ENCODE measurements at regions of chr18 and their contacts with region 1.

Region 1: GRCh38 chr18:61635901-61636528 is 256.8 kb downstream of the RNF152 start:
- DNase-seq: peak; percentile 65 to 80 (median 69)
- ATAC-seq: peak; percentile 82
- H3K4me3 ChIP-seq: no peak overlapping the region
- H3K27ac ChIP-seq: peak overlapping the region; percentile 18 to 75 (median 47)
- H3K4me1 ChIP-seq: peaks cover 26% of the 10 kb centered on the region
- H3K27me3 ChIP-seq: no peaks in the 10 kb centered on the region
- CTCF ChIP-seq: peak in 6 of 7 experiments; percentile 80 to 96 (median 88)
- POLR2A ChIP-seq: no peak

Region 2: DNA sequence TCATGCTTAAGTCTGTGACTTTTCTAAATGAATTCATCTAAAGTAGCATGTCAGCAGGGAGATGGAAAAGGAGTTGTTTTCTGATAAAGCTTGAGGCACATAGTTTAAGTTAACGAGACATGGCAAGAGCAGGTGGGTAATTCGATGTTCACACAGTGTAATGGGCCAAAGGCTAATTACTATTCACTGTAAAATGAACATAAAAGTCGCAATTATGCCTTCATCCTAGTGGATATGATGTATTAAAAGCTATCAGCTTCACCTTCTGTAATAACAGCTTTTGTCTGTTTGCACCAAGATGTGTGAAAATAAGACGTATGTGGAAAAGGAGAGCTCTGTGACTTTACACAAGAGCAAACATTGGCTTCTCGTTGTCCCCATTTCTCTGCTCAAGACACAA is 397.0 kb before region 1 on chr18:
- intact Hi-C with region 1: no loop called
- DNase-seq: no peak
- ATAC-seq: no peak
- H3K4me3 ChIP-seq: no peak overlapping the region
- H3K27ac ChIP-seq: no peak overlapping the region
- H3K4me1 ChIP-seq: no peaks in the 10 kb centered on the region
- H3K27me3 ChIP-seq: no peaks in the 10 kb centered on the region
- CTCF ChIP-seq: no peak
- POLR2A ChIP-seq: no peak

Region 3: DNA sequence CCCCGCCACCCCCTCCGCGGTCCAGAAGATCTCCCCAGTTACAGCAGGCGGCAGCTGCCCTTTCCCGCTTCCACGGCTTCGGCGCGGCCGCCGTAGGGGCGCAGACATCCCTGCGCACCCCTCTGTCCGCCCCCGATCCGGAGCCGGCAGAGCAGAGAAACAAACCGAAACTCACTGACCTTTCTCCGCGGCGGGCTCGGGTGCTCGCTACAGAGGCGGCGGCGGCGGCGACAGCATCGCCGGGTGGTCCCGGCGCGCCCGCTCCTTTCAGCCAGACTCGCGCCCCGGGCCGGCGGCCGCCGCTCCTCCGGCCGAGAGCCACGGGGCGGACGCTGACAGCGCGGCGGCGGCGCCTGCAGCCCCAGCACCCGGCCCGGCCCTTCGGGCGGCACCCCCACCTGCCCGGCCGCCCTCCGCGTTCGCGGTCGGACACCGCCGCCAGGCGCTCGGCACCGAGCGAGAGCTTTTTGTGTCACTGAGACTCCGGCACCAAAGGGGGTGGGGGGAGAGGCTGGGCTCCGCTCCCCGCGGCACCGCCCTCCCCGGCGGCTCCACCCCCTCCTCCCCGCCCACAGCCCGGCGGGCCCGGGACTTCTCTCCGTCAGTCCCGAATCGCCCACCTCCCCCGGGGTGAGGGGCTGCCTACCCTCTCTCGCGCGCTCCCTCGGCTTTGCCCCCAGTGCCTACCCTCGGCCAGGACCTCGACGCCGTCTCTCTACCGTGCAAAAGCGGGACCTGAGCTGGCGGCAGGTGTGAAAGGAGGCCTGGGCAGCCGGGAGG is 258.1 kb after region 1 on chr18:
- intact Hi-C with region 1: loop called (anchors 5 kb)
- DNase-seq: peak; percentile 80 to 87 (median 84)
- ATAC-seq: peak; percentile 89
- H3K4me3 ChIP-seq: peak overlapping the region; percentile 46 to 95
- H3K27ac ChIP-seq: peak overlapping the region; percentile 22 to 85 (median 74)
- H3K4me1 ChIP-seq: peaks cover 24% of the 10 kb centered on the region
- H3K27me3 ChIP-seq: no peaks in the 10 kb centered on the region
- CTCF ChIP-seq: peak in 6 of 7 experiments; percentile 8 to 82 (median 35)
- POLR2A ChIP-seq: peak; percentile 21 to 47 (median 42)

Measured in body of pancreas (tissue), 4 donors.